ENCODE measurements at regions of chr3 and their contacts with region 1.

Region 1: DNA sequence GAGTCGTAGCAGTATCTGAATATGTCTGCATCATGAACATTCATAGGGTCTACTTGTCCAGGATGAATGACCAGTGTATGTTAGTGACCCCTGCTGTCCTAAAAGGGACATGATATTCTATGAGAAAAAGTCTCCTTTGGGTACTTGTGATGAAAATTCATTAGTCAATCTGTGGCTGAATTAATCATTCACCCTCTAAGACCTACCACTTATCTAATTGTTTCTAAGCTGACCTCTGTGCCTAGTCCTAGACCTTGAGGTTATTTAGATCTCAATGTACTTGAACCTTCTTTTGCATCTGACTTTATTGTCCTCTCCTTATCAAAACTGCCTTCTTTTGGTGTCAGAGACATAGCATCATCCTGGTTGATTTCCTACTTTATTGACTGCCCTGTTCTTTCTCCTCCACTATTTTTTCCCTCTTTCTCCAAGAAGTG is 799.3 kb downstream of the DIPK2A start:
- DNase-seq: no peak
- H3K4me3 ChIP-seq: no peak overlapping the region
- H3K27ac ChIP-seq: no peak overlapping the region
- H3K4me1 ChIP-seq: peaks cover 0 to 6% (median 2%) of the 10 kb centered on the region in 4 donors
- H3K27me3 ChIP-seq: no peaks in the 10 kb centered on the region
- CTCF ChIP-seq: peak; percentile 20 to 48 (median 27)
- EP300 ChIP-seq: no peak
- POLR2A ChIP-seq: no peak

Region 2: DNA sequence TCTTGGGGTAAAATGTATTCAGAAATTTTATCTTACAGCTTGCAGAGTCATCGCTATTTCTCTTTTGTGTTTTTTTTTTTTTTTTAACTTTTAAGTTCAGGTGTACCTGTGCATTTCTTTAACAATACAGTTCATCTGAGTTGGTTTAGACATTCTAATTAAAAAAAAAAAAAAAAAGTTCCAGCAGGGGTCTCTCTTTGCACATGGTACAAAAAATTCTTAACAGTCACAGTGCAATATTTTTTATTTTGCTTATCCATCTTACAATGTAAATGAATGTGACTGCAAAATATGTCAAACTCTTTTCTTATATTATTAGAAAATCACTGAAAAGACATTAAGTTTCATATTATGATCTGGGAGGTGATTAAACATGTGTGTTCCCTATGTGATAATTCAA is 875.1 kb before region 1 on chr3:
- intact Hi-C with region 1: loop called (anchors 10 kb)
- DNase-seq: no peak
- H3K4me3 ChIP-seq: no peak overlapping the region
- H3K27ac ChIP-seq: no peak overlapping the region
- H3K4me1 ChIP-seq: peaks cover 0 to 14% (median 9%) of the 10 kb centered on the region in 4 donors
- H3K27me3 ChIP-seq: no peaks in the 10 kb centered on the region
- CTCF ChIP-seq: peak in 2 of 3 experiments; percentile 24 to 32
- EP300 ChIP-seq: no peak
- POLR2A ChIP-seq: no peak

Region 3: GRCh38 chr3:144923046-144923775 is 152.3 kb after region 1 on chr3:
- intact Hi-C with region 1: no loop called
- DNase-seq: no peak
- H3K4me3 ChIP-seq: no peak overlapping the region
- H3K27ac ChIP-seq: no peak overlapping the region
- H3K4me1 ChIP-seq: peaks cover 0 to 13% (median 6%) of the 10 kb centered on the region in 4 donors
- H3K27me3 ChIP-seq: no peaks in the 10 kb centered on the region
- CTCF ChIP-seq: no peak
- EP300 ChIP-seq: no peak
- POLR2A ChIP-seq: no peak

Measured in esophagus muscularis mucosa (tissue), 4 donors.